BJ (cell line): ENCODE measurements at regions of chr2 and their contacts with region 1.

Region 1: DNA sequence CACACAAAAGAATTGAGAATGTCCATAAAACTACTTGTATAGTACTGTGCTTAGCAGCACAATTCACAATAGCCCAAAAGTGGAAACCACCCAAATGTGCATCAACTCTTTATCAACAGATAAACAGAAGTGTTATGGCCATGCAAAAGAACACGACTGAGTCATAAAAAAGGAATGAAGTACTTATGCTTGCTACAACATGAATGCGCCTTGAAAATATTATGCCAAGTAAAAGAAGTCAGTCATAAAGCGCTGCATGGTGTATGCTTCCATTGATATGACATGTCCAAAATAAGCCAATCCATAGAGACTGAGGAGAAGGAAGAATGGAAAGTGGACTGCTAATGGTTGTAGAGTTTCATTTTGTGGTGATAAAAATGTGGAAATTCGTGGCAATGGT is 12.1 kb upstream of the MAP2 start:
- DNase-seq: no peak
- H3K4me3 ChIP-seq: no peak overlapping the region
- H3K27me3 ChIP-seq: no peaks in the 10 kb centered on the region
- CTCF ChIP-seq: no peak

Region 2: GRCh38 chr2:209441541-209441940 is 29.8 kb after region 1 on chr2:
- CTCF ChIA-PET with region 1: no interaction called
- POLR2A ChIA-PET with region 1: no interaction called
- DNase-seq: no peak
- H3K4me3 ChIP-seq: no peak overlapping the region
- H3K27me3 ChIP-seq: no peaks in the 10 kb centered on the region
- CTCF ChIP-seq: no peak

Region 3: GRCh38 chr2:210162466-210163124 is 750.9 kb after region 1 on chr2:
- CTCF ChIA-PET with region 1: no interaction called
- POLR2A ChIA-PET with region 1: interaction called, 14 read pairs
- DNase-seq: no peak
- H3K4me3 ChIP-seq: no peak overlapping the region
- H3K27me3 ChIP-seq: no peaks in the 10 kb centered on the region
- CTCF ChIP-seq: no peak